Activated CD4-positive, alpha-beta T cell treated with anti-CD3 and anti-CD28 coated beads, Interleukin-2, amount 10 ng/mL, durations not matched to agents 24 days and 14 days (primary cell): ENCODE measurements at regions of chr3 and their contacts with region 1.

Region 1: GRCh38 chr3:189967254-189967865 is 153.3 kb downstream of the P3H2 start:
- DNase-seq: peak; percentile 81
- H3K4me3 Mint-ChIP-seq: no peak overlapping the region
- H3K27ac Mint-ChIP-seq: no peak overlapping the region
- H3K4me1 Mint-ChIP-seq: peaks cover 6% of the 10 kb centered on the region
- H3K27me3 Mint-ChIP-seq: peaks cover 15% of the 10 kb centered on the region

Region 2: GRCh38 chr3:189947948-189948723 is 19.2 kb before region 1 on chr3:
- intact Hi-C with region 1: no loop called
- DNase-seq: peak; percentile 75
- H3K4me3 Mint-ChIP-seq: peak overlapping the region; percentile 24
- H3K27ac Mint-ChIP-seq: peak overlapping the region; percentile 38
- H3K4me1 Mint-ChIP-seq: peaks cover 3% of the 10 kb centered on the region
- H3K27me3 Mint-ChIP-seq: peaks cover 5% of the 10 kb centered on the region

Region 3: GRCh38 chr3:190205739-190206138 is 238.4 kb after region 1 on chr3:
- intact Hi-C with region 1: loop called (anchors 1 kb)
- DNase-seq: no peak
- H3K4me3 Mint-ChIP-seq: no peak overlapping the region
- H3K27ac Mint-ChIP-seq: no peak overlapping the region
- H3K4me1 Mint-ChIP-seq: peaks cover 8% of the 10 kb centered on the region
- H3K27me3 Mint-ChIP-seq: peaks cover 14% of the 10 kb centered on the region

Region 4: DNA sequence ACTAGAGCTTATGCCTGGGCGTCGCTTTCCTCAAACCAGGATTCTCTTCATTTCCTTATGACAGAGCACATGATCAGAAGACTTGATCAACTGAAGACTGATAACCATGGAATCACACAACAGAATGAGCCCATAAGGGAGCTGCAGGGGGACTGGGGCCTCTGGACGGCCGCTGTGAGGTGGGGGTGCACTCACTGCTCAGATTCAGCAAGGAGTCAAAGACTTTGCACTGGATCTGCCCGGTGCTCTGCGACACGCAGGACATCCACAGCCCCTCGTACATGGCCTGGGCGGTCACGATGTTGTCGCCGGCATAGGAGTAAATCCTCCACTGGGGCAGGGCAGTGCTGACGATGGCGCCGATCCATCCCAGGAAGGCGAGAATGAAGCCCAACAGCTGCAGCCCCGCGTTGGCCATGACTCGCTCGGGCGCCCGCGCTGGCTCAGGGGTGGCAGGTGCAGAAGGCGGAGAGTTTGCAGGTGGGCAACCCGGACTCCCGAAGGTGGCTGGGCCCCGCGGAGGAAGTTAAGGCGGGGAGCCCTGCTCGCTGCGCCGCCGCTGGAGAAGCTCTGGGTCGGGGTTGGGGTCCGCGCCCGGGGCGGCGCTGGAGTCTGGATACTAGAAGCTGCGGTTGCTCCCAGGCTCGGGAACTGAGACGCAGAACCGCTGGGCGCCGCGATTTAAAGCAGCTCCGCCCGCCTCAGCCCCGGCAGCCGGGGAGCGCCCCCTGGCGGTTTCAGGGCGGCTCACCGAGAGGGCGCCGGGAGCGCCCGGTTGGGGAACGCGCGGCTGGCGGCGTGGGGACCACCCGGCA is 354.6 kb after region 1 on chr3 and contains the start of gene CLDN1:
- intact Hi-C with region 1: loop called (anchors 1 kb)
- DNase-seq: peak; percentile 93
- H3K4me3 Mint-ChIP-seq: peak within 1 kb of the TSS; percentile 75
- H3K27ac Mint-ChIP-seq: no peak within 1 kb of the TSS
- H3K4me1 Mint-ChIP-seq: peaks cover 31% of the 10 kb centered on the region
- H3K27me3 Mint-ChIP-seq: peaks cover 22% of the 10 kb centered on the region
- total RNA-seq, gene CLDN1: 0.33 and 0.52 TPM in 2 replicates

Region 5: DNA sequence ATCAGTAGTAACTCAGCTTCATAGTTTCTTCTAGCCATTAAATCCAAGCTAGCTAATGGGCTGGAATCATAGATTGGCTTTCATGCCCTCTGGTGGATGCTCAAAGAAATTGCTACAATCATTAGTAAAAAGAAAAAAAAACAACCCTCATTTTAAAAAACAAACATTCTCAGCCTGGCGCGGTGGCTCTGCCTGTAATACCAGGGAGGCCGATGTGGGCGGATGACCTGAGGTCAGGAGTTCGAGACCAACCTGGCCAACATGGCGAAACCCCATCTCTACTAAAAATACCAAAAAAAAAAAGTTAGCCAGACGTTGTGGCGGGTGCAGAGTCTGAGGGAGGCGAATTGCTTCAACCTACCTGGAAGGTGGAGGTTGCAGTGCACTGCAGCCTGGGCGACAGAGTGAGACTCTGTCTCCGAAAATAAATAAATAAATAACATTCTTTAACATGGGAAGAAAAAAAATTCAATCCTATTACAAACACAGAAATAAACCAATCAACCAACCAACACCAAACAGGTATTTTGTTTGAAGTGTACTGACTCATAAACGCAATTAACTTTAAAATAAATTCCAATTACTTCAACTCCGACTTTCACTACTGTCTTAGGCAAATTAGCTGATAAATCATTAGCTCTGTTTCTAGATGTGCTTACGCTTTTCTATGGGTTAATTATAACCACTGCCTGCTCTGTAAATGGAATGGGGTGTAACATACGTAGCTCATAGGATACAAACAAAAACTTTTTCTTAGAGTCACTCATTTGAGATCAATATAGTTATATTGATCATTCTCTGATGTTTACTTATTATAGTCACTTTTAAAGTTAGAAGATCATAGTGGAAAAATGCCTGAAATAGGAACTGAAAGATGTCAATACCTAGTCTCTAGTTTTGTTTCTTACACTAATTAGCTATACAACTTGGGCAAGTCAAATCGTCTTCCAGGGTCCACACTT is 457.4 kb after region 1 on chr3:
- intact Hi-C with region 1: loop called (anchors 1 kb)
- DNase-seq: peak; percentile 72
- H3K4me3 Mint-ChIP-seq: no peak overlapping the region
- H3K27ac Mint-ChIP-seq: no peak overlapping the region
- H3K4me1 Mint-ChIP-seq: peaks cover 2% of the 10 kb centered on the region
- H3K27me3 Mint-ChIP-seq: peaks cover 5% of the 10 kb centered on the region

Region 6: GRCh38 chr3:191051037-191051436 is 1083.7 kb after region 1 on chr3:
- intact Hi-C with region 1: loop called (anchors 2 kb)
- DNase-seq: no peak
- H3K4me3 Mint-ChIP-seq: no peak overlapping the region
- H3K27ac Mint-ChIP-seq: no peak overlapping the region
- H3K4me1 Mint-ChIP-seq: no peaks in the 10 kb centered on the region
- H3K27me3 Mint-ChIP-seq: no peaks in the 10 kb centered on the region